ENCODE measurements at regions of chr16 and their contacts with region 1.

Region 1: DNA sequence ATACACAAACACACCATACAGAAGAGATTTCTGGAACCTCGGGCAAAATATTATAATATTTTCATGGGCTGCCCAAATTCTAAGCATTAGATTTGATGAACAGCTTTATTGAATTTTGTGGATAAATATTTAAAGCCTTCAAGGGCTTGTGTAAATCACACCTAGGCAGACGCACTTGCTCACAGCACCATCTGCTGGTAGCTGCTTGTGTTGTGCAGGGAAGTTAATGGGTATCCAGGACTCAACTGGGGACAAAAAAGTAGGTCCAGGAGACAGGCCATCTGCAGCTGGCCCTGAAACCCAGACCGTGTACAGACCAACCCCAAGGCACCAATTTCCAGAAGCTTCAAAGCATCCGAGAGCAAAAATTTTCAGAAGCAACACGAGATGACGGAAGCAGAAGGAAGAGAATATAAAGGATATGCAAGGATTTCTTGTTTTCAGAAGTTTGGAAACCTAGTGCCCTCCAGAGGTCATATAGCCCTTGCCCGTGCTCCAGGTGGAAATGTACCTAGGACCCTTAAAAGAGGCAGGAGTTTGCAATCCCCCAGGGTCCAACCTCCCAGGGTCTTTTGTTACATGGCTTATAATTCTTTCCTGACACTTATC is 140.0 kb downstream of the CHD9NB start:
- DNase-seq: peak; percentile 45
- CTCF ChIP-seq: peak; percentile 80

Region 2: DNA sequence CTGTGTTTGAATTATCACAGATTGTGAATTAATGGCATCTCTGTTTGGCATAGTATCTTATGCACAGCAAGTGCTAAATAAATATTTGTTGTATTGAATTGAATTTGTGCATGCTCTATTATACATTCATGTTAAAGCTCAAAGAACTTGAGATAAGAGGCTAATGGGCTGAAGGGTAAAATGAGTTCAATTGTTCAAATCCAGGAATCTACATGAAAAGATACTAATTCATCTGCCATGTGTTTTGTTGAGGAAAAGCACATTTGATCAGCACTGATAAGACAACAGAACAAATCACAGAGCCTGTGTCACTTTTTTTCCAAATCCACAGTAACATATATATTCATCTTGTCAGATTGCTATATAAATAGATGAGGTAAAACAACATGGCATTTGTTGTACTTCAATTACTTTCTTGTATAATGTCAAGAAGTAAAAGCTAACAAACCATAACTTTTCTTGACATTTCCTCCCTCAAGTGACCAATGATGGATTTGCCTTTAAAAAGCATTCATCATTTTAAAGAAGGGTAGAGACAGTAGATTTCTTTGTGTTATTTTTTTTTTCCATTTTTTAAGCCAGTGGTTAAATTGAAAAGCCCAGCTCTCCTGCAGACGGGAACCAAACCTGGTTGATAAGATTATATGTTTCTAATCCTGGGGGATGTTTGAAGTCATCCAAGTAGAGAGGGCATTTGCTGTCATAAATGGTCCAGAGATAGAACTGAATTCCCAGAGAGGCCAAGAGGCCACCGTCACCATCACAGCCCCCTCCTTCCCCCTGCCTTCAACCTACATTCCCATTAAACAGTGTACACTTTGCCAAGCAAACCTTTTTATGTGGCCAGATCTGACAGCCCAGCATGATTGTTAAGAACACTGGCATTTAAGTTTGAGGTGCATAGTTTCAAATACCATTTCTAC is 17.1 kb after region 1 on chr16:
- CTCF ChIA-PET with region 1: interaction called, 13 read pairs
- POLR2A ChIA-PET with region 1: no interaction called
- DNase-seq: no peak
- CTCF ChIP-seq: no peak

Measured in GM10248 (cell line).